ACHN (cell line): ENCODE measurements at regions of chrX and their contacts with region 1.

Region 1: DNA sequence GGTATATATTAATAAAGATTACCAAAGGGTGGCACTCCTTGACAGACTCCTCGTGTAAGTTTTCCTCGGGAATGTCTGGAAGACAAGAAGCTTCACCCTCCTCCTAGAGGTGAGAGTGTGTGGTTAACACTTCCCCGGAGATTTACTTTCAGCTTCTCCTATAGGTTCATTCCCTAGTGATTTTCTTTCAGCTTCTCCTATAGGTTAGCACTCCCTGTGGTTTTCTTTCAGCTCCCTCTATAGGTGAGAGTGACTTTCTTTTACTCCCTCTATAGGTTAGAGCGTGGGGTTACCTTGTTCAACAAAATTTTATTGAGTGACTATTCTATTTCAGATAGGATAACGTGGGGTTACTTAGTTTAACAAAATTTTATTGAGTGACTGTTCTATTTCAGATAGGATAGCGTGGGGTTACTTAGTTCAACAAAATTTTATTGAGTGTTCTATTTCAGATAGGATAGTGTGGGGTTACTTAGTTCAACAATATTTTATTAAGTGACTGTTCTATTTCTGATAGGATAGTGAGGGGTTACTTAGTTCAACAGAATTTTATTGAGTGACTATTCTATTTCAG is 106.0 kb upstream of the PLAC1 start:
- DNase-seq: peak; percentile 29

Region 2: GRCh38 chrX:134520860-134521390 is 243.4 kb before region 1 on chrX:
- in situ Hi-C with region 1: loop called (anchors 25 kb)
- DNase-seq: peak; percentile 53

Region 3: GRCh38 chrX:134551376-134552048 is 212.8 kb before region 1 on chrX:
- in situ Hi-C with region 1: no loop called
- DNase-seq: peak; percentile 67

Region 4: DNA sequence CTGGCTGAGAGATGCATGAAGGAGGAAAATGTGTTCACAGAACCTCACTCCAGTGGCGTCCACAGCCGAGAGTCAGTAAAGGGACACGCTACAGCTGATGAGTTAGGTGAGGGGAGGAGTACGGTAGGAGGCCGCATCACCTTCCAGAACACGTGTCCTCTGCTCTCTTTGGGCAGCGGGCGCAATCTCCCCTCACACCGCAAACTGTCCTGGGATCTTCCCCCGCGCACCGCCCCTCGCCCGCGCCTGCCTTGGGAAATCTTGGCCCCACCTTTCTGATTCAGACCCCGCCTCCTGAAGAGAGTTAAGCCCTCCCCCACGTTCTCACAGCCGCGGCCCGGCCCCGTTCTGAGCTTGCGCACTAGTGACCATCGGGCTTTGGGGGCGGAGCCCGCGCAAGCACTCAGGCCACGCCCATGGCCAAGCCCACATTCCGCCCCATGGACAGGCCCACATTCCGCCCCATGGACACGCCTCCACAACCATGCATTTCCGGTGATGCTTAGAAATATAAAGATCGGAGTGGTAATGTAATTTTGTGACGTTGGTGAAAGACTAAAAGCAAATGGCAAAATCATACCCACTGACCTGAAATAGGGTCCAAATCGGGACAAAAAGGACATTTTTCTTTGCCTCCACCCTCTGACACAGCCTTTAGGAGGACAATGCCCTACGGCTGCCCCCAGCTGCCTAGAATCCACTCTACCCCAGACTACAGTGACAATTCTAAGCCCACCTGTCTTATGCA is 239.8 kb after region 1 on chrX:
- in situ Hi-C with region 1: no loop called
- DNase-seq: peak; percentile 80